ENCODE measurements at regions of chr10 and their contacts with region 1.

Region 1: GRCh38 chr10:102461187-102462054 is 10.1 kb upstream of the C10orf95 start:
- DNase-seq: peak; percentile 94 to 98
- H3K4me3 ChIP-seq: peak overlapping the region; percentile 54
- H3K4me3 Mint-ChIP-seq: peak overlapping the region; percentile 96
- H3K27ac Mint-ChIP-seq: peak overlapping the region; percentile 78
- H3K4me1 ChIP-seq: peaks cover 32% of the 10 kb centered on the region
- H3K4me1 Mint-ChIP-seq: peaks cover 24% of the 10 kb centered on the region
- H3K27me3 ChIP-seq: no peaks in the 10 kb centered on the region
- H3K27me3 Mint-ChIP-seq: no peaks in the 10 kb centered on the region
- CTCF ChIP-seq: no peak

Region 2: DNA sequence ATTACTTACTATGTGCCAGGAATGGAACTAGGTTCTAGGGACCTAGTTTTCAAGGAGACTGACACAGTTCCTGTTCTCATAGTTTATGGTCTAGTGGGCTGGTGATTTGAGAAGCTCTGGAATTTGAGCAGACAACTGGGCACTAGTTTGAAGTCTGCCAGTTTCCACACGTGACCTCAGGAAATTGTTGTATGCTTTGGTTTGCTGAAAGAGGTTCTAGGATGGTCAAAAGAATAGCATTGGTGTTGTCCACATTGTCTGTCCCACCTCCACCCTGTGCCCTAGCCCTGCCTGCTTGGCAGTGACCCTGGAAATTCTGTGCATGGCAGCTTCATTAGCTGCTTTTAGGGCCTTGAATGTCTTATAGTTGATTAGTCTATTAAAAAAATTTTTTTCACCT is 187.4 kb before region 1 on chr10:
- CTCF ChIA-PET with region 1: no interaction called
- POLR2A ChIA-PET with region 1: no interaction called
- intact Hi-C with region 1: no loop called
- DNase-seq: no peak
- H3K4me3 ChIP-seq: no peak overlapping the region
- H3K4me3 Mint-ChIP-seq: no peak overlapping the region
- H3K27ac Mint-ChIP-seq: no peak overlapping the region
- H3K4me1 ChIP-seq: no peaks in the 10 kb centered on the region
- H3K4me1 Mint-ChIP-seq: no peaks in the 10 kb centered on the region
- H3K27me3 ChIP-seq: no peaks in the 10 kb centered on the region
- H3K27me3 Mint-ChIP-seq: no peaks in the 10 kb centered on the region
- CTCF ChIP-seq: no peak

Region 3: GRCh38 chr10:102450194-102450938 is 11.1 kb before region 1 on chr10:
- CTCF ChIA-PET with region 1: no interaction called
- POLR2A ChIA-PET with region 1: interaction called, 23 read pairs
- intact Hi-C with region 1: loop called (anchors 1 kb)
- DNase-seq: peak; percentile 89 to 94
- H3K4me3 ChIP-seq: peak overlapping the region; percentile 84
- H3K4me3 Mint-ChIP-seq: peak overlapping the region; percentile 90
- H3K27ac Mint-ChIP-seq: peak overlapping the region; percentile 90
- H3K4me1 ChIP-seq: peaks cover 39% of the 10 kb centered on the region
- H3K4me1 Mint-ChIP-seq: peaks cover 30% of the 10 kb centered on the region
- H3K27me3 ChIP-seq: no peaks in the 10 kb centered on the region
- H3K27me3 Mint-ChIP-seq: no peaks in the 10 kb centered on the region
- CTCF ChIP-seq: peak in 1 of 2 experiments; percentile 5